ENCODE measurements at regions of chr11 and their contacts with region 1.

Region 1: GRCh38 chr11:108222686-108223448 is at the start of gene ATM:
- DNase-seq: peak; percentile 100
- ATAC-seq: peak; percentile 81
- H3K4me3 ChIP-seq: peak within 1 kb of the TSS; percentile 97 to 99 (median 98)
- H3K4me3 Mint-ChIP-seq: no peak within 1 kb of the TSS
- H3K27ac ChIP-seq: peak within 1 kb of the TSS; percentile 98 to 99
- H3K27ac Mint-ChIP-seq: no peak within 1 kb of the TSS
- H3K4me1 ChIP-seq: peaks cover 58% of the 10 kb centered on the region in 2 donors
- H3K4me1 Mint-ChIP-seq: peaks cover 62% of the 10 kb centered on the region
- H3K27me3 ChIP-seq: no peaks in the 10 kb centered on the region
- H3K27me3 Mint-ChIP-seq: no peaks in the 10 kb centered on the region
- CTCF ChIP-seq: peak; percentile 77
- total RNA-seq, gene ATM: 446 and 471 TPM in 2 replicates

Region 2: DNA sequence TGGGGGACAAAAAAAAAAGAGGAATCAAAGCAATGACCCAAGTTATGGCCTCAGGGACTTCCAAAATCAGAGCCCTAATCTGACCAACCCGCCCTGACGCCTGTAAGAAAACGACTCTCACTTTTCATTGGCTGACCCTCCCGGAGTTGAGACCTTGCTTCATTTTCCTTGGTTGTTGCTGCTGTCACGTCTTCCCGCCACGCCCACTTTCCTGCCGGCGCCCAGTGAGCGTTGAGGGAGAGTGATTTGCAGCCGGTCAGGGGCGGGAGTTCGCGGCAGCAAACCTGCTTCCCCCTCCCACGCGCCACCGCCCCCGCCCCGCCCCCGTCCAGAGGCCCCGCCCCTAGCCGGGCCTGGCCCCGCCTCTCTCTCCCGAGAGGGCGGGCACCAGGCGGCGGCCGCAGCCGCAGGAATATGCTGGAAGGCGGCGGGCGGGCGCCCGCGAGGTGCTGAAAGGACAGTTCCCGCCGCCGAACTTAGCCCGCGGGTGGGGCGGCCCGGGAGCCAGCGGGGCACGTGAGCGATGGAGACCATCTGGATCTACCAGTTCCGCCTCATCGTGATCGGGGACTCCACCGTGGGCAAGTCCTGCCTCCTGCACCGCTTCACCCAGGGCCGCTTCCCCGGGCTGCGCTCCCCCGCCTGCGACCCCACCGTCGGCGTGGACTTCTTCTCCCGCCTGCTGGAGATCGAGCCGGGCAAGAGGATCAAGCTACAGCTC is 294.7 kb before region 1 on chr11 and contains the start of gene RAB39A:
- CTCF ChIA-PET with region 1: no interaction called
- POLR2A ChIA-PET with region 1: interaction called, 3 read pairs
- intact Hi-C with region 1: loop called (anchors 5 kb)
- DNase-seq: peak; percentile 94
- ATAC-seq: peak; percentile 85
- H3K4me3 ChIP-seq: peak within 1 kb of the TSS; percentile 44 to 89 (median 74)
- H3K4me3 Mint-ChIP-seq: peak within 1 kb of the TSS; percentile 88
- H3K27ac ChIP-seq: peak within 1 kb of the TSS; percentile 37 to 52
- H3K27ac Mint-ChIP-seq: peak within 1 kb of the TSS; percentile 88
- H3K4me1 ChIP-seq: peaks cover 16 to 19% of the 10 kb centered on the region in 2 donors
- H3K4me1 Mint-ChIP-seq: peaks cover 30% of the 10 kb centered on the region
- H3K27me3 ChIP-seq: peaks cover 0 to 3% (median 0%) of the 10 kb centered on the region in 4 experiments
- H3K27me3 Mint-ChIP-seq: peaks cover 5% of the 10 kb centered on the region
- CTCF ChIP-seq: no peak
- total RNA-seq, gene RAB39A: 2.4 TPM in 2 replicates

Region 3: DNA sequence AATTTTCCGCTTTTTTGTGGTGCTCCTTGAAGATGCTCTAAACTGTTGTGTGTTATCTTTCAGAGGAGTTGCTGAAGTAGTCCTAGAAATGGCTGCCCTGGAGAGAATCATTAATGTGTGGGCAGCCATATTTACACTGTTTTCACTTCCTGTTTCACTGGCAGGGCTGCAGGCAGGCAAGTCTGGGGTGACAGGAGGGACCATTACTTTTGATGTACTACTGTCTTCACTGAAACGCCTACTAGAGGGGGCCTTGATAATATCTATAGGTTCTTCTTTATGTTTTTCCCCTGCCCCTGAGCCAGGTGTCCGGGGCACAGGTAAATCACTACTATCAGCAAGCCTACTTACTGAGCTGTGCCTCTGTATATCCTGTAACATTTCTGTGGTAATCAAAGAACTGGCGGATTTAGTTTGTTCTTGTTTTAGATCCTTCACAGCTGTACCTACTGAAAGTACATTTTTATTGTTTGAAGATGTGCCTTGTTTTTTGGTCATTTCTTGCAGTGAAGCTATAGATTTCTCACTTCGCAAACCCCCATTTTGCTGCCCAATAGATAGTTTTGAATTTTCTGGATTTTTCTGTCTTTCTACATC is 61.8 kb before region 1 on chr11:
- CTCF ChIA-PET with region 1: no interaction called
- POLR2A ChIA-PET with region 1: no interaction called
- intact Hi-C with region 1: loop called (anchors 2 kb)
- DNase-seq: peak; percentile 76
- ATAC-seq: peak; percentile 99
- H3K4me3 ChIP-seq: no peak overlapping the region
- H3K4me3 Mint-ChIP-seq: peak overlapping the region; percentile 24
- H3K27ac ChIP-seq: peak overlapping the region; percentile 46 to 59
- H3K27ac Mint-ChIP-seq: peak overlapping the region; percentile 88
- H3K4me1 ChIP-seq: peaks cover 13 to 14% of the 10 kb centered on the region in 2 donors
- H3K4me1 Mint-ChIP-seq: peaks cover 12% of the 10 kb centered on the region
- H3K27me3 ChIP-seq: no peaks in the 10 kb centered on the region
- H3K27me3 Mint-ChIP-seq: no peaks in the 10 kb centered on the region
- CTCF ChIP-seq: no peak

Region 4: GRCh38 chr11:108289699-108290098 is 66.8 kb after region 1 on chr11:
- CTCF ChIA-PET with region 1: interaction called, 6 read pairs
- POLR2A ChIA-PET with region 1: interaction called, 4 read pairs
- intact Hi-C with region 1: loop called (anchors 1 kb)
- DNase-seq: peak; percentile 37
- ATAC-seq: peak; percentile 93
- H3K4me3 ChIP-seq: no peak overlapping the region
- H3K4me3 Mint-ChIP-seq: peak overlapping the region; percentile 13
- H3K27ac ChIP-seq: peak overlapping the region in 1 of 2 donors; percentile 55
- H3K27ac Mint-ChIP-seq: peak overlapping the region; percentile 76
- H3K4me1 ChIP-seq: peaks cover 6 to 8% of the 10 kb centered on the region in 2 donors
- H3K4me1 Mint-ChIP-seq: peaks cover 10% of the 10 kb centered on the region
- H3K27me3 ChIP-seq: no peaks in the 10 kb centered on the region
- H3K27me3 Mint-ChIP-seq: no peaks in the 10 kb centered on the region
- CTCF ChIP-seq: no peak

Region 5: DNA sequence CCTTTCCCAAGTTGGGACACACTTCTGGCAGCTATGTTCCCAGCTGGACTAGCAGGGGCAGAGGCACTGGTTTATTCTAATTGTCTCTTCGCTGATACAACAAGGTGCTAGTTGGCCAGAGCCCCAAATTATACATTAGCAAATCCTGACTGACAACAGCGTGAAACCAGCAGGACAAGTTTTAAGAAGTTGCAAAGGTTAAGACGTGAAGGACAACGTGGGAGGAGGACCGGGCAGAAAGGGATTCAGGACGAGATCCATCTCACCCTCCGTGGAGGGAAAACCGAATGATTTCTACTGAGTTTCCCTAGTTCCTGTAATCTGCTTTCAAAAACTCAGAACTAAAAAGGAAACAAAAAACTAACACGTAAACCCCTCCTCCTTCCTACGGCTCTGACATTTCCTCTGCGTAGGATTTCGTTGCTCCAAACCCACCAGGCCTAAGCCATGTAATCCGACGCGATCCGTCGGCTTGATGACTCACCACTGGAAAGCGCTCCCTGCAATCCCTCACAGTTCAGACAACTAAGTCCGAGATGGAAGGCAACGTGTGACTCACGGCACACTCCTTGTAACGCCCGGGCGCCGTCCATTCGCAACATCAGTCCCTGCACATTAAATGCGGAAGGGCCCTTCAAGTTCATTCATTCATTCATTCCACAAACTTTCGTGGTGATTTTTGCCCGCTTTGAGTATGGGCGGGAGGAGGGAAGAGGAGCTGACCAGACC is 274.6 kb after region 1 on chr11:
- CTCF ChIA-PET with region 1: no interaction called
- POLR2A ChIA-PET with region 1: no interaction called
- intact Hi-C with region 1: loop called (anchors 10 kb)
- DNase-seq: peak; percentile 80
- ATAC-seq: peak; percentile 67
- H3K4me3 ChIP-seq: peak overlapping the region; percentile 71 to 93 (median 80)
- H3K4me3 Mint-ChIP-seq: peak overlapping the region; percentile 100
- H3K27ac ChIP-seq: peak overlapping the region; percentile 71 to 80
- H3K27ac Mint-ChIP-seq: peak overlapping the region; percentile 98
- H3K4me1 ChIP-seq: peaks cover 0 to 7% of the 10 kb centered on the region in 2 donors
- H3K4me1 Mint-ChIP-seq: peaks cover 13% of the 10 kb centered on the region
- H3K27me3 ChIP-seq: no peaks in the 10 kb centered on the region
- H3K27me3 Mint-ChIP-seq: no peaks in the 10 kb centered on the region
- CTCF ChIP-seq: no peak

Measured in B cell (primary cell).